ENCODE measurements at regions of chr6 and their contacts with region 1.

Region 1: DNA sequence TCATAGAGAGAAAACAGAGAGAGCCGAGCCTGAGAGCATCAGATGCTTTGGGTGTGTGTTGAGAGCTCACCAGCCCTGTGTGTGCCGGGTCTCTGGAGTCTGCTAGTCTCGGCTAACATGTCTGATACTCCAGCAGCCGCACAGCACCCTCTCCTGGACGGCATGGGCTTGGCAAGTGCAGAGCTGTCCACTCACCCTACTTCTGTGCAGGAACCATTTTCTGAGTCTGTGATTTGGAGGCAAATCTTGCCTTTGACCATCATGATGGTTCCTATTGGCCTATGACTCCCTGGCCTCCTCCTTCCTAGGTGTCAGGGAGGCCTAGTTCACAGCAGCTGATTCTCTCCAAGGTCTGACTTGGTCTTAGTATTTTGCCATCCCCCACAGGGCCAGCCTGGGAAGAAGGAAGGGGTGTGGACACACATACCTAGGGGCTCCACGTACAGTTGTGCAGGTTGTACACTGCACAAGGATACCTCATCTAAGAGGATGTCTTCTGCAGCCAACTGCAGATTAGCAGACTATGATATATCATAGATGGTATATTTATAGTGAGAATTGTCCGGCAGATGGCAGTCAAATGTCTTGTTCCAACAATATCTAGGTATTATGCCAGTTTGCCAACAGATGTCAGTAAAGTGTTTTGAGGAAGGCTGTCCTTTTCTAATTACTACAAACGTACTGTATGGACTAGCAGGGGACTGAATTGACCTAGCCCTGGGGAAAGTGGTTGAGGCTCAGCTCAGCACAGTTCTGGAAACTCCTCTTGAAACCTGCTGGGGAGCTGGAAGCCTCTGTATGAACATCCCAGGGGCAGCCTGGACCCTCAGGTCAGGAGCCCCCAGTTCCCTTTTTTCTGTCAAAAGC is 13.0 kb downstream of the FGD2 start:
- DNase-seq: peak; percentile 95
- H3K4me3 Mint-ChIP-seq: no peak overlapping the region
- H3K27ac Mint-ChIP-seq: peak overlapping the region; percentile 12
- H3K4me1 Mint-ChIP-seq: peaks cover 58% of the 10 kb centered on the region
- H3K27me3 Mint-ChIP-seq: no peaks in the 10 kb centered on the region
- CTCF ChIP-seq: peak; percentile 92

Region 2: DNA sequence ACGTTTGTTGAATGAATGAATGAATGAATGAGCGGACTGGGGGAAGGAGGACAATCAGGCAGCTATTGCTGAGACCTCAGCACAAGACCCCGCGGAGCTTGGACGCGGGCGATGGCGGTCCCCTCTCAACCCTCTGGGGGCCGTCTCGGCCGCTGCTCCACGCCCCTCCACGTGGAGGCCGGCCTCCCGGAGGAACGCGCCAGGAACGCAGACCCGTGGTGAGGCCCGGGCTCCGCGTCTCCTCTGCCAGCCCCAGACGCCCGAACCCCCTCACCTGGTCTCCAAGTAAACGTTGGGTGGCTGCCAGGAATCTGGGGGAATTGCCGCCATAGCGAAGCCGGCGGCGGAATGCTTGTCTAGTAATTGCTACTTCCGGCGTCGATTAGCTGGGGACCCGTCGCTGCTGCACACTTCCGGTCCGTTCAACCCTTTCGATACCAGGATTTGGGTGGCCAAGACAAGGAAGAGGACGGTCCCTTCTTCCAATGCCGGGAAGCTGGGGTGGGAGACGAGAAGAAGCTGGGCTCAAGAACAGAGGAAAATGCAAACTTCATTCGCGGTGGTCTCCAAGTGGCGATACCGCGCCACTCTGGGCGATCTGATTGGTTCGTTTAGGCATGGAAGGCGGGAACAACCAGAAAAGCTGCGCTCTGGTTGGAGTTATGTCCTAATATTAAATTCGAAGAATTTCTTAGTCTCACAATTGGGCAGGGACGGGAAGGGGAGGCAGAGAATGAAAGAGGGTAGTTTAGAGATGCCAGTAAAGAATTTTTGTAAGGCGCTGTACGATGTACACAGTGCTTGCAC is 143.8 kb before region 1 on chr6 and contains the start of gene PPIL1:
- CTCF ChIA-PET with region 1: interaction called, 17 read pairs
- intact Hi-C with region 1: no loop called
- DNase-seq: peak; percentile 88
- H3K4me3 Mint-ChIP-seq: peak within 1 kb of the TSS; percentile 91
- H3K27ac Mint-ChIP-seq: peak within 1 kb of the TSS; percentile 99
- H3K4me1 Mint-ChIP-seq: peaks cover 27% of the 10 kb centered on the region
- H3K27me3 Mint-ChIP-seq: no peaks in the 10 kb centered on the region
- CTCF ChIP-seq: no peak
- total RNA-seq, gene PPIL1: 59.6 and 64.4 TPM in 2 replicates

Region 3: GRCh38 chr6:36912586-36912985 is 105.8 kb before region 1 on chr6:
- CTCF ChIA-PET with region 1: interaction called, 58 read pairs
- intact Hi-C with region 1: loop called (anchors 1 kb)
- DNase-seq: no peak
- H3K4me3 Mint-ChIP-seq: no peak overlapping the region
- H3K27ac Mint-ChIP-seq: peak overlapping the region; percentile 28
- H3K4me1 Mint-ChIP-seq: peaks cover 51% of the 10 kb centered on the region
- H3K27me3 Mint-ChIP-seq: no peaks in the 10 kb centered on the region
- CTCF ChIP-seq: no peak

Region 4: DNA sequence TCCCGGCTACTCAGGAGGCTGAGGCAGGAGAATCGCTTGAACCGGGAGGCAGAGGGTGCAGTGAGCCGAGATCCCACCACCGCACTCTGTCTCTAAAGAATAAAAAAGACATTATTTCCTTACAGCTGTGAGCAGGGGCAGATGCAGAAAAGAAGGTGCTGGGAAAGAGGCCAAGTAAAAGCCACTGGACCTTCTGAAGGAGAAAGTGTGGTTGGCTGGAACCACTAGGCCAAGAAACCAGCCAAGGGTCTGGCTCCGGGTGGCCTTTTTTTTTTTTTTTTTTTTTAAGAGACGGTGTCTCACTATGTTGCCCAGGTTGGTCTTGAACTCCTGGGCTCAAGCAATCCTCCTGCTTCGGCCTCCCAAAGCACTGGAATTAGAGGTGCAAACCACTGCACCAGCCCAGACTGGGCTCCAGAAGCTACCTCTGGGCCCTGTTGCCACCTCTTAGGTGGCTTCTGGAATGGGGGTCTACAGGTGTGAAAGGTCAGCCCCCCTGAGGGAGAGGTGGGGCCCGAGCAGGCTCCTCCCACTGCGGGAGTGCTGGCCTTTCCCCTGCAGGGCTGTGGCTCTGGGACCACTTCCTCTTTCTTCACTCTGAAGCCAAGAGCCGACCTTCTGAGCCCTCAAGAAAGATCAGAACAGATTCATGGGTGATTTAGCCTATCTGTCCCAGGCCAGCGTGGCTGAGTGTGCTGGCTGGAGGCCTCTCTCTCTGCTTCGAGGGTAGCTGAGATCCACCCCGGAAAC is 13.2 kb before region 1 on chr6 and contains the start of gene FGD2:
- CTCF ChIA-PET with region 1: interaction called, 14 read pairs
- intact Hi-C with region 1: no loop called
- DNase-seq: no peak
- H3K4me3 Mint-ChIP-seq: no peak within 1 kb of the TSS
- H3K27ac Mint-ChIP-seq: no peak within 1 kb of the TSS
- H3K4me1 Mint-ChIP-seq: no peaks in the 10 kb centered on the region
- H3K27me3 Mint-ChIP-seq: peaks cover 58% of the 10 kb centered on the region
- CTCF ChIP-seq: no peak
- total RNA-seq, gene FGD2: 0.19 and 1.0 TPM in 2 replicates

Region 5: DNA sequence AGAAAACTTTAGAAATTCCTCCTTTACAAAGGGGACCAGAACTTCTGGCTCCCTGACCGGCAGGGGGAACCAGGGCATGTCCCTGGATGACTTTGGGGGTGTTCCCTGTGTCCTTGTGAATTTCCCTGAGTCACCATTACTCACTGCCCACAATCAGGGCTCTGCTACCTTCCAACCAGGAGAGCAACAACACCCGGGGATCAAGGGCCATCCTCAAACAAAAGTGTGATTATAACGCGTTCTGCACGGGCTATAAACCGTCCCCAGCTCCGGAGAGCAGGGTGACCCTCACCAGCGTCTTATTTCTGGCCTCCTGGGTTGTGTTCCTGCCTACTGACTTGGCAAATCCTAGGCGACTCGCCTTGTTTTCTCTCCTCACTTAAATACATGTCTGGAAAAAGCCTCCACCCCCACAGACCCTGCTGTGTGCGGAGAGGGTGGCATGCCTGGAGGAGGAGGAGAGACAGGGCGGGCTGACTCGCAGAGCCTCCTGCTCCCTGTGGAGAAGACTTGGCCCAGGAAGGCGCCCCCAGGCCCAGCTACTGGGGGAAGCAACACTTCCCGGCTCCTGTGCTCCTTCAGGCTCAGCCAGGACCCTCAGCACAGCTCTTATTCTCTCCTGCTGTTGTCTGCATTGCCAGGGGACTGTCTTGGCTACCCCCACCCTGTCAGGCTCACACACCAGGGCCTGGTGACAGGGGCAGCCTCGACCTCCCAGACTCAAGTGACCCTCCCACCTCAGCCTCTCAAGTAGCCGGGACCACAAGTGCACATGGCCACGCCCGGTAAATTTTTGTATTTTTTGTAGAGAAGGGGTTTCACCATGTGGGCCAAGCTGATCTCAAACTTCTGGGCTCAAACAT is 41.1 kb after region 1 on chr6:
- CTCF ChIA-PET with region 1: interaction called, 6 read pairs
- intact Hi-C with region 1: loop called (anchors 5 kb)
- DNase-seq: peak; percentile 90
- H3K4me3 Mint-ChIP-seq: peak overlapping the region; percentile 53
- H3K27ac Mint-ChIP-seq: peak overlapping the region; percentile 79
- H3K4me1 Mint-ChIP-seq: peaks cover 64% of the 10 kb centered on the region
- H3K27me3 Mint-ChIP-seq: no peaks in the 10 kb centered on the region
- CTCF ChIP-seq: peak; percentile 77

Region 6: DNA sequence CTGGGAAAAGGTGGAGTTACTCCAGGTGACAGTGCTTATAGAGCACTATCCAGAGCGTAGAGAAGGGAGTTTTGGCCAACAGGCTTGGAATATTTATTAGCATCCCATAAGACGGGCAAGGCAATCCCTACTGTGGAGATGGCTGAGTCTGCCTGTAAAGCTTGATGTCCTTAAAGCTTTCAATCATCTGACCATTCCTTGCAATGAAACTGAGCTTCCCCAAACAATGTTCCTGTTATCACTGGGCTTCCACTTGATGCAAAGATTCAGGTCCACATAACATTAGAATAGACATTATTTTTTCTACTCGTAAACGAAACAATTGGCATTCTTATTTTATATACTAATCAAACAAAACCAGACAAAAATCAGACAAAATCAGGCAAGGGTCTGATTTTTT is 103.1 kb after region 1 on chr6:
- CTCF ChIA-PET with region 1: no interaction called
- intact Hi-C with region 1: no loop called
- DNase-seq: no peak
- H3K4me3 Mint-ChIP-seq: no peak overlapping the region
- H3K27ac Mint-ChIP-seq: no peak overlapping the region
- H3K4me1 Mint-ChIP-seq: peaks cover 11% of the 10 kb centered on the region
- H3K27me3 Mint-ChIP-seq: no peaks in the 10 kb centered on the region
- CTCF ChIP-seq: no peak

Region 7: DNA sequence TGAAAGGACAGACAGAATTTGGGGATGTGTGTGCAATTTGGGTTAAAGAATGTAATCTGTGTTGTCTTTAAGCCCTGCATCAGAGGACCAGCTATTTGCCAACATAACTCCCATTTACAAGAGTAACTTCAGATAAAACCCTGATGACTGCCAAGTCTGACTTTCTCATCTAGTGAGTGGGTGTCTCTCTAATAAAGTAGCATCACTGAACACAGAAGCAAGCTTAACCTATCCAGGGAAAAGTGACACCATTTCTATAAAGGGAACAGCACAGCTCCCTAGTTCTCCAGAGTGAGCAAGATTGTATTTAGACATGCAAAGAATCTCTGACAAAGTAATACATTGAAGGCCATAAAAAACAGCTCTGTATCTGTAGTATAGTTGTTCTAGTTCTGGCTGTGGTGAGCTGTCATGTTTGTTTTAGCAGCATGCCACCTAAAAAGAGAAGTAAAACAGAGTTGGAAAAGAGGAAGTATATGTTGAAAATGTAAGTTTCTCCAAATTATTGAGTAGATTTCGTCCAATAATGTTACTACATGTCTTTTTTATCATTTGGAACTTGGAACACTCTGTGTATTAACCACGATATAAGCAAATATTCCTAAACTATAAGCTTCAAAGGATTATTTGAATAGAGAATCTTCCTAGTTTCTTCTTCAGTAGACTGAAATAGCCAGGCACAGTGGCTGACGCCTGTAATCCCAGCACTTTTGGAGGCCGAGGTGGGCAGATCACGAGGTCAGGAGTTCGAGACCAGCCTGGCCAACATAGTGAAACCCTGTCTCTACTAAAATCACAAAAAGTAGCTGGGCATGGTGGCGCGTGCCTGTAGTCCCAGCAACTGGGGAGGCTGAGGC is 142.7 kb after region 1 on chr6:
- CTCF ChIA-PET with region 1: no interaction called
- intact Hi-C with region 1: no loop called
- DNase-seq: no peak
- H3K4me3 Mint-ChIP-seq: no peak overlapping the region
- H3K27ac Mint-ChIP-seq: no peak overlapping the region
- H3K4me1 Mint-ChIP-seq: peaks cover 9% of the 10 kb centered on the region
- H3K27me3 Mint-ChIP-seq: no peaks in the 10 kb centered on the region
- CTCF ChIP-seq: no peak

Region 8: DNA sequence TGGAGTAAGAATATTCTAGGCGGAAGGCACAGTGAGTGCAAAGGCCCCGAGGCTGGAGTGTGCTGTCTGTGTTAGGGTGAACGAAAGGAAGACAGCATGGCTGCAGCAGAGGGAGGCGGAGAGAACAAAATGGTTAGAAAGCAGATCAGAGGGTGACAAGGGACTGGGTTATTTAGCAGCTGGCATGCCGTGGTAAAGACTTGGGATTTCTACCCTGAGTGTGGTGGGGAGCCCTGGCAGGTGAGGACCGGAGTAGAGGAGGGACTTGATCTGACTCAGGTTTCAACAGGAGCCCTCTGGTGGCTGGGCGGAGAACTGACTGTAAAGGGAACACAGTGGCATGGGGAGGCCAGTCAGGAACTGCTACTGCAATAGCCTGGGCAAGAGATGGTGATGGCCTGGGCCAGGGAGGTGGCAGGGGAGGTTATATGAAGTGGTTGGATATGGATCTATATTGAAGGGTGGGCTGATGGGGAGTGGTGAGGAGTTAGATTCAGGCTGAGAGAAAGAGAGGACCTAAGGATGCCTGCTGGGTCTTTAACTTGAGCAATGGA is 189.5 kb after region 1 on chr6:
- CTCF ChIA-PET with region 1: interaction called, 185 read pairs
- intact Hi-C with region 1: loop called (anchors 1 kb)
- DNase-seq: peak; percentile 95
- H3K4me3 Mint-ChIP-seq: no peak overlapping the region
- H3K27ac Mint-ChIP-seq: no peak overlapping the region
- H3K4me1 Mint-ChIP-seq: peaks cover 28% of the 10 kb centered on the region
- H3K27me3 Mint-ChIP-seq: no peaks in the 10 kb centered on the region
- CTCF ChIP-seq: peak; percentile 89